Left cardiac atrium (tissue), 4 donors: ENCODE measurements at regions of chr14 and their contacts with region 1.

Region 1: DNA sequence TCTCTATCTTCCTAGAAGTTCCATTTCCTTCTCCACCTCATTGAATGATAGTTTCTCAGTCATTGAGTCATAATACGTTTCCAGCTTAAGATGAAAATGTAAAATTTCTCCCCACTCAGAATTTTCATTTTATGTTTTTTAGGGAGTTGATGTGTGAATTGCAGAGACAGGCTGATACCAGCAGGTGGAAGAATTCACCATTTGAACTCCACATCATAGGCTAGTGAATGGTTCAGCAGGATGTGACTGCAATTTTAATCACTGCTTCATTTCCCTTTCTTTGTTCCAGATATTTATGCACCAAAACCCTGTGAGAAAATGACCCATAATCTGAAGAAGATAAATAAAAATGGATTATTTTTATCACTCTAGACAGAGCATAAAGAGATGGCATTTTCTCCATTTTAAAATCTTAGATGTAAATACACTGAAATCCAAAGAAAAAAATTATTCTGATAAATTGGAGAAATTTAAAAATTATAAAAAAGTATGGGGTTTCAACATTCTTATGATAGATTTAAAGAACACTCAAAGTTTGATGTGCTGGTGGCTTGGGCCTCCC is 10.6 kb upstream of the PYGL start:
- DNase-seq: no peak
- ATAC-seq: peak; percentile 78 to 88

Region 2: GRCh38 chr14:51020024-51020710 is 65.3 kb after region 1 on chr14:
- intact Hi-C with region 1: no loop called
- DNase-seq: no peak
- ATAC-seq: peak; percentile 25 to 68

Region 3: GRCh38 chr14:51094901-51095853 is 140.3 kb after region 1 on chr14 and contains the start of gene TRIM9:
- intact Hi-C with region 1: loop called in 1 of 2 experiments (anchors 10 kb)
- DNase-seq: peak; percentile 91
- ATAC-seq: peak; percentile 95 to 99
- total RNA-seq, gene TRIM9: 0.24 to 0.89 TPM

Region 4: DNA sequence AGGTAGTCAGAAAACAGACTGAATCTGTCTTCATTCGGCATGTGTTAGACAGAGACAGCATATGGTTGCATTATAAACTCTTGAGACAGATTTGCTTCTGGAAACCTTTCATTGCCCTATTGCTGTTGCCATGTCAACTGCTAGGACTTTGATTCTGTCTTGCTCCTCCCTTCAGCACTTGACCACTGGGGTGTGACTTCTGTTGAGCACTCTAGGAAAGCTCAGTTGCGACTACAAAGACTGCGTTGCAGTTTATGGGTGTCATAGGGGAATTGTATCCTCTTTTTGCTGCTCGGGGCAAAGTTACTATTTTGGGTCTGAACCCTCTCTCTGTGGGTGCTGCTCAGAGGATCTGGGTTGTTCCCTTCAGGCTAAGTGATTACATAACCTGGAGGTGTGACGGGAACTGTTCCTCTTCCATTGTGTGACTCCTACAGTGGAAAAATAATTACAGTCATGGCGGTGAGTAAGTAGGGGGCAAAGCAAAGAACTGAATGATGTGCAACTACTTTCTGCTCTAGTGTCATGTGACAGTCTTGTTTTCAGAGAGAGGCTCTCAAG is 184.3 kb after region 1 on chr14:
- intact Hi-C with region 1: no loop called
- DNase-seq: no peak
- ATAC-seq: peak in 1 of 2 donors; percentile 60

Region 5: DNA sequence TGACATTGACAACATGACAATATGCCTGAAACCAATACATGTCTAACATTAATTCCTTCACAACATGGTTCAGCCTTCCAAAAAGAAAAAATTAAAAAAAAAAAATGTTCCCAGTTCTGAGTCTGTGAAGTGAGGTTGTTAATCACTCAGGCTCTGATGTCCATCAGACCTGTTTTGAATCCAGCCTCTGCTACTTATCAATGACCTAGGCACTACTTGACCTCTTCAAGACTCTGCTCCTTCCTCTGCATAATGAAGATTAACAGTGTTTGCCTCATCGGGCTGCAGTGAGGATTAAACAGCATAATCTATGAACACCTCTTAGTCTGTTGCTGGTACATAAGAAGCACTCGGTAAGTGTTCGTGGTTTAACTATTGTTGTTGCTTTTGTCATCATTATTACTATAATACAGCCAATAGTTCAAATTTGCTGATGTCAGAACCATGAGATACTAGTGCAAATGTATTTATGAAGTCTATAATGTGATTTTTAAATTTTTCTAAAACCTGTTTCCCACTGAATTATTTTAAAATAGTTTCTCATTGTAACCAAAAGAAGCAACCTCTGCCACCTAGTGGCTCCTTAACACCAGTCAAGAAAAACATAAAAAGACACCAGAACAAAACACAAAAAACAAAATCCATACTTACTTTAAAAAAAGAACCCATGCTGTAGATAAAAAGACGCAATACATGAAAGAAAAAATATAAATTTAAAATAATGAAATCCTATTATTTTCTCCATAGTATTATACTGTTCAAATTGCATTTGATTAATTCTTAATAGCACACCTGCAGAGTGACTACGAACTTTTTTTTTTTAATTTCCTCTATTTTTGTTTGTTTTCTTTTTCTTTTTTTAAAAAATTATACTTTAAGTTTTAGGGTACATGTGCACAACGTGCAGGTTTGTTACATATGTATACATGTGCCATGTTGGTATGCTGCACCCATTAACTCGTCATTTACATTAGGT is 264.9 kb after region 1 on chr14:
- intact Hi-C with region 1: loop called (anchors 5 kb)
- DNase-seq: no peak
- ATAC-seq: no peak

Region 6: GRCh38 chr14:51780006-51780692 is 825.3 kb after region 1 on chr14:
- intact Hi-C with region 1: loop called in 1 of 2 experiments (anchors 10 kb)
- DNase-seq: peak; percentile 73
- ATAC-seq: peak; percentile 61 to 71